Prostate gland (tissue), 2 donors: ENCODE measurements at regions of chr16 and their contacts with region 1.

Region 1: GRCh38 chr16:813204-813915 is 12.8 kb upstream of the GNG13 start:
- DNase-seq: no peak
- H3K4me3 ChIP-seq: no peak overlapping the region
- H3K27ac ChIP-seq: no peak overlapping the region
- H3K4me1 ChIP-seq: no peaks in the 10 kb centered on the region
- H3K27me3 ChIP-seq: peaks cover 9% of the 10 kb centered on the region
- CTCF ChIP-seq: peak in 3 of 4 experiments; percentile 62 to 74 (median 73)
- POLR2A ChIP-seq: no peak

Region 2: DNA sequence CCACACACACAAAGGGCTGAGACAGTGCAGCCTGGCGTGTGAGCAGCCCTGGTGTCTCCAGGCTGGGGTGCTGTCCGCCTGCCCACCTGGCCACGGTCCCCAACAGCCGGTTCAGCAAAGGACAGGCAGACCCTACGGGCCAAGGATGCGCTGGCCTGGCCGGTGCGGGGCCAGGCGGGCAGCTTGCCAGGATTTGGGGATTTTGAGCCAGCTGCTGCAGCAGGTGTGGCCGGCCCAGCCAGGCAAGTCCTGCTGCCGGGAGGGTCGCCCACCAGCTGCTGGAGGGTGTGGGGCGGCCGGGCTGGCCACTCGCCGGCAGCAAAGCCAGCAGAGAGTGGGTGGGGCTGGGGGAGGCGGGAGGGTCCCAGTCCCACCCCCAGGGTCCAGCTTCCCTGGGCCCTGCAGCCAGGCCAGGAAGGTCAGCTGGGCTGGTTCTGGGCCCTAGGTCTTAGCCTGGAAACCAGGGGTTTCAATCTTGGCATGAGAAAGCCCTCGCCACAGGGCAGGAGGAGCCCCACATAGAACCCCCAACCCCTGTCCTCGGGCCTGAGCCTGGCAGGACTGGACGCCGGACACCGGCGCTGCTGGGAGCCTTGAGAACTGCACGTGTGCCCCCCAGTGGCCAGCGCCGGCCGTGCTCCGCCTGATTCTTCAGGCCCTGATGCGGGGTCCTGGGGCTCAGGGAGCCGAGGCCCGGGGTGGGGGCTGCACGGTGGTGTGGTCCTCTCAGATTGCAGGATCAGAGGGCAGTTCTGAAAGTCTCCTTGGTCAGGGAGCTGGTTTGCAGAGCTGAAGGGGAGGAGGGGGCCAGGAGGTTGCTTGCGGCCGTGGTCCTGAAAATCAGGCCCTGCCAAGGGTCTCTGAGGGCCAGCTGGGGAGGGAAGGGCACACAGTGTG is 241.5 kb after region 1 on chr16:
- intact Hi-C with region 1: loop called (anchors 2 kb)
- DNase-seq: peak; percentile 35
- H3K4me3 ChIP-seq: no peak overlapping the region
- H3K27ac ChIP-seq: no peak overlapping the region
- H3K4me1 ChIP-seq: peaks cover 3% of the 10 kb centered on the region
- H3K27me3 ChIP-seq: no peaks in the 10 kb centered on the region
- CTCF ChIP-seq: peak; percentile 44 to 92 (median 87)
- POLR2A ChIP-seq: no peak

Region 3: DNA sequence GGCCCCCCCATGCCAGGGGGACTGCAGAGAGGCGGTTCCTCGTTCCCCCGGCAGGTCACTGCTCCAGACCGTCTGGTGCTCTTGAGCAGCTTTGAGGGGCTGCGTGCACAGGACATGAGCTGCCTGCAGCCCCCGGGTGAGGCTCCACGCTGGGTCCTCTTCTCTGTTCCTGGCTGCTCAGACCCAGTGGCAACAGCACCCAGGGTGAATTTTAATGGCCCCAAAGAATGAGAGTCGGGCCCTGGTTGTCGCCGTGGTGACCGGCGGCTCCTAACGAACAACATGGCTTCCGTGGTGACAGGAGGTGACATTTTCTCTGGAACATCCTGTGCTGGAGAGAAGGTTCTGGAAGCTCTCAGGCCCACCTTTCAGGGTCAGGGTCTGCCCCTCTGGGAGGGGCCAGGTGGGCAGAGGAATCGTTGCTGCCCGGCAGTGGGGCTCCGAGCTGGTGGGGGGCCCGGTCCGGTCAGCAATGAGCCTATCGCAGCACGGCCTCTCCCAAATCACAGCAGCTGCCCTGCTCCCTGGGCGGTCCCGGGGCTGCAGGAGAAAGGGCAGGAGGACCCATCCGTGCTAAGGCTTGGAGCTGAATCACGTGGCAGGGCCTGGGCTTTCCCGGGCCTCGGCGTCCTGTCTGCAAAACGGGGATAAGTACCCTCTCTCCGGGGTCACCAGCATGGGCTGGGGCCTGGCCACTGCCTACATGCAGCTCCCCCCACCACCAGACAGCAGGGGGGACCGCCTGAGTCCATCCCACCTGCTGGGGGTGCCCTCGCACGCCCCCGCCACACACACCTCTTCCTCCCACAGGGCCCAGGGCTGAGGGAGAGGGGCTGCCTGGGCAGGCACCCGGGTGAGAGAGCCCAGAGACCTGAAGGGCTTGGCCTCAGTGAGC is 286.1 kb after region 1 on chr16:
- intact Hi-C with region 1: loop called (anchors 2 kb)
- DNase-seq: no peak
- H3K4me3 ChIP-seq: no peak overlapping the region
- H3K27ac ChIP-seq: no peak overlapping the region
- H3K4me1 ChIP-seq: no peaks in the 10 kb centered on the region
- H3K27me3 ChIP-seq: peaks cover 6% of the 10 kb centered on the region
- CTCF ChIP-seq: no peak
- POLR2A ChIP-seq: no peak